Endothelial cell of umbilical vein (primary cell): ENCODE measurements at regions of chr10 and their contacts with region 1.

Region 1: DNA sequence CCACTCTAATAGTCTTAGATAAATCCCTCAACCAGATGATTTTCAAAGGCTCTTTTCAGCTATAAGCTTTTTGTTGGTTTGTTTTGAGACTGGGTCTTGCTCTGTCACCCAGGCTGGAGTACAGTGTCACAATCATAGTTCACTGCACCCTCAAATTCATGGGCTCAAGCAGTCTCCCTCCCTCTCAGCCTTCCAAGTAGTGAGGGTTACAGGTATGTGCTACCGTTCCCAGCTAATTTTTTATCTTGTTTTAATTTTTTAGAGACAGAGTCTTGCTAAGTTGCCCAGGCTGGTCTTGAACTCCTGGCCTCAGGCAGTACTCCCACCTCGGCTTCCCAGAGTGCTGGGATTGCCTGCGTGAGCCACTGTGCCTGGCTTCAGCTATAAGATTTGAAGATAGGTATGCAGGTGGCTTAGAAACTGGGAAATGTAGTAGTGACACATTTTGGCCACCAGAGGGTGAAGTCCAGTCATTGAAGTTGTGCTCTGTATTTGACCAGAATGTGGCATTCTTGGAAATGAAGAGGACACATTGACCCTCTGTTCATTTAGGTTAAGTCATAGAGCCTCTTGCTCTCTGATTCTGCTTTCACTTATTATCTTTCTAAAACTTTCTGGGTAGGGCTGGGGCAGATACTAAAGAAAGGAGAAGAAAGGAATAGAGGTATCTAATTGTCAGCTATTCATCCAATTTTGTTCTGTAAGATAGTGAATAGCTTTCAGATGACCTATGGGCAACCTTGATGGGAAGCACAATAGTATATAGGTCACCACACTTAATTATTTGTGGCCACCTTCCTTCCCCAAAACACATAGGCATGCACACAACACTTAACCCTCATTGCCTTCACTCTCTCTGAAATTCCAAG is 36.0 kb downstream of the R3HCC1L start:
- DNase-seq: peak; percentile 67
- H3K4me3 ChIP-seq: no peak overlapping the region
- H3K27ac ChIP-seq: no peak overlapping the region
- H3K4me1 ChIP-seq: no peaks in the 10 kb centered on the region
- H3K27me3 ChIP-seq: no peaks in the 10 kb centered on the region
- CTCF ChIP-seq: peak; percentile 61 to 79
- POLR2A ChIP-seq: no peak

Region 2: DNA sequence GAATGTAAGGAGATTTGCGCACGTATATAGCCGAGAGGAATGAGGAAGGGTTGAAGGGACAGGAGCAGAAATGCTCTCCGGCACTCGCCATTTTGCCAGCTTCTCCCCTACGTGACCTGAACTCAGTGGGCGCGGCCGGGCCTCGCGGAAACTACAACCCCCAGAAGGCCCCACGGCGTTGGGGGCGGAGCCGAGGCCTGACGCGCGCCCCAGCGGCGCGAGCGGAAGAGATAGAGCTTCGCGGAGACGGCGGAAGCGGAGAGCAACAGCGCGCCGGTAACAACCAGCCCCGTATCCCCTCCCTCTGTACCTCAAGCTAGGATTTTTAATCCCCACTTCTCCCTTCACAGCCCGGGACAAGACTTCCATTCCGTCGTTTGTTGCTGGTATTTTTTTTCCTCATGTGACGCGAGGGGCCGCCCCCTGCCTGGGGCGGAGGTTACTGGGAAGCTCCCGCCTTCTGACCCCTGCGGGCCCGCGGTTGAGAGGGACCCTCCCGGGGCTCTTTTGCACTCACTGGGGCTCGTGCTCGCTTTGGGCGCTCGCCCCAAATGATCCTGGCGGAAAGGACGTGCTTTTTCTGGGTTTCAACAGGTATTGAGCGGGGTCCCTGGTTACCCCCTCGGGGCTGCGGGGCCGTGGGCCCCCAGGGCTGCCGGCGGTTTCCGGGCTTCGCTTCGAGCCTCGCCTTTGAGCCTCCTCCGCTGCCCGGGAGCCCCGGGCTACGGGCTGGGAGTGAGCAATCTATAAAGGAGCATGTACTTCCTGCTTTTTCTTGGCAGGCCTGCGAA is 35.9 kb before region 1 on chr10 and contains the start of gene R3HCC1L:
- CTCF ChIA-PET with region 1: interaction called, 12 read pairs
- POLR2A ChIA-PET with region 1: no interaction called
- dilution Hi-C with region 1: no loop called
- intact Hi-C with region 1: no loop called
- DNase-seq: peak; percentile 87
- H3K4me3 ChIP-seq: peak within 1 kb of the TSS; percentile 52 to 77 (median 74)
- H3K27ac ChIP-seq: peak within 1 kb of the TSS; percentile 76
- H3K4me1 ChIP-seq: peaks cover 6% of the 10 kb centered on the region
- H3K27me3 ChIP-seq: no peaks in the 10 kb centered on the region
- CTCF ChIP-seq: no peak
- POLR2A ChIP-seq: peak; percentile 94
- total RNA-seq, gene R3HCC1L: 11.1 and 12.4 TPM in 2 replicates

Region 3: DNA sequence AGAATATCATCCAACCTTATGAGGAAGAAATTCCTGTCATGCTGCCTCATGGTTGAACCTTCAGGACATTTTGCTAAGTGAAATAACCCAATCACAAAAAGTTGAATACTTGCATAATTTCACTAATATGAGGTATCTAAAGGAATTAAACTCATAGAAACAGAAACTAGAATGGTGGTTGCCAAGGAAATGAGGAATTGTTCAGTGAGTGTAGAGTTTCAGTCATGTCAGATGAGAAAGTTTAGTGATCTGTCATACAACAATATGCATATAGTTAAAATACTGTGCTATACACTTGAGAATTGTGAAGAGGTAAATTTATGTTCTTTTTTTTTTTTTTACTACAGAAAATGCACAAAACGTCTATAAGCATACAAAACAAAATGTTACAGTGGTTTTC is 24.6 kb after region 1 on chr10:
- CTCF ChIA-PET with region 1: interaction called, 29 read pairs
- POLR2A ChIA-PET with region 1: no interaction called
- dilution Hi-C with region 1: no loop called
- intact Hi-C with region 1: no loop called
- DNase-seq: no peak
- H3K4me3 ChIP-seq: no peak overlapping the region
- H3K27ac ChIP-seq: no peak overlapping the region
- H3K4me1 ChIP-seq: no peaks in the 10 kb centered on the region
- H3K27me3 ChIP-seq: no peaks in the 10 kb centered on the region
- CTCF ChIP-seq: no peak
- POLR2A ChIP-seq: no peak

Region 4: GRCh38 chr10:98235846-98236245 is 65.4 kb after region 1 on chr10:
- CTCF ChIA-PET with region 1: interaction called, 25 read pairs
- POLR2A ChIA-PET with region 1: no interaction called
- dilution Hi-C with region 1: no loop called
- intact Hi-C with region 1: no loop called
- DNase-seq: no peak
- H3K4me3 ChIP-seq: no peak overlapping the region
- H3K27ac ChIP-seq: no peak overlapping the region
- H3K4me1 ChIP-seq: no peaks in the 10 kb centered on the region
- H3K27me3 ChIP-seq: no peaks in the 10 kb centered on the region
- CTCF ChIP-seq: no peak
- POLR2A ChIP-seq: no peak

Region 5: GRCh38 chr10:98331885-98332284 is 161.4 kb after region 1 on chr10:
- CTCF ChIA-PET with region 1: interaction called, 17 read pairs
- POLR2A ChIA-PET with region 1: no interaction called
- dilution Hi-C with region 1: no loop called
- intact Hi-C with region 1: no loop called
- DNase-seq: no peak
- H3K4me3 ChIP-seq: no peak overlapping the region
- H3K27ac ChIP-seq: no peak overlapping the region
- H3K4me1 ChIP-seq: no peaks in the 10 kb centered on the region
- H3K27me3 ChIP-seq: peaks cover 3 to 8% of the 10 kb centered on the region in 2 experiments
- CTCF ChIP-seq: peak; percentile 41 to 43
- POLR2A ChIP-seq: no peak

Region 6: GRCh38 chr10:99276848-99277486 is 1106.5 kb after region 1 on chr10:
- CTCF ChIA-PET with region 1: interaction called, 15 read pairs
- POLR2A ChIA-PET with region 1: no interaction called
- dilution Hi-C with region 1: no loop called
- intact Hi-C with region 1: no loop called
- DNase-seq: peak; percentile 30
- H3K4me3 ChIP-seq: no peak overlapping the region
- H3K27ac ChIP-seq: no peak overlapping the region
- H3K4me1 ChIP-seq: no peaks in the 10 kb centered on the region
- H3K27me3 ChIP-seq: no peaks in the 10 kb centered on the region
- CTCF ChIP-seq: peak; percentile 18 to 19
- POLR2A ChIP-seq: no peak